ENCODE measurements at regions of chr17 and their contacts with region 1.

Region 1: GRCh38 chr17:7897773-7898172 is 9.2 kb downstream of the CHD3 start:
- DNase-seq: no peak
- H3K4me3 ChIP-seq: no peak overlapping the region
- H3K27ac ChIP-seq: no peak overlapping the region
- H3K27me3 ChIP-seq: no peaks in the 10 kb centered on the region
- CTCF ChIP-seq: peak; percentile 70

Region 2: GRCh38 chr17:7740481-7741001 is 157.2 kb before region 1 on chr17:
- CTCF ChIA-PET with region 1: interaction called, 11 read pairs
- POLR2A ChIA-PET with region 1: no interaction called
- DNase-seq: no peak
- H3K4me3 ChIP-seq: peak overlapping the region; percentile 7; the same call in 1 of the 2 replicates
- H3K27ac ChIP-seq: no peak overlapping the region
- H3K27me3 ChIP-seq: peaks cover 26% of the 10 kb centered on the region
- CTCF ChIP-seq: no peak

Region 3: GRCh38 chr17:7862692-7863437 is 34.9 kb before region 1 on chr17:
- CTCF ChIA-PET with region 1: interaction called, 46 read pairs
- POLR2A ChIA-PET with region 1: no interaction called
- DNase-seq: no peak
- H3K4me3 ChIP-seq: no peak overlapping the region
- H3K27ac ChIP-seq: no peak overlapping the region
- H3K27me3 ChIP-seq: no peaks in the 10 kb centered on the region
- CTCF ChIP-seq: peak; percentile 74

Region 4: DNA sequence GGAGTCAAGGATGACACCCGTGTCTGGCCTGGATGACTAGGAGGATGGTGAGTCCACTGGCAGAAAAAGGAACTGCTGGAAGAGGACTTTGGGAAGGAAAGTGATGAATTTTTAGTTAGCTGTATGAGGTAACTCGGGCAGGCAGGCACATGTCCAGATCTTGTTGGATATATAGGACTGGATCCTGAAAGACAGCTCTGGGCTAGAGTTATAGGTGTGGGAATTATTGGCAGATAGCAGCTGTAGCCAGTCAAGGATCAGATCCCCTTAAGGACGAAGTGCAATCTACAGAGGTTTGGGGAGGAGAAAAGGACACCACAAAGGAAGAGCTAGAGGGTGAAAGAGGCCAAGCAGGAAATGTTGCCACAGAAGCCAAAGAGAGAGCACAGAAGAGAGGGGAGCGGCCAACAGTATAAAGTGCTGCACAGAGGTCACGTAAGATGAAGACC is 29.9 kb before region 1 on chr17:
- CTCF ChIA-PET with region 1: interaction called, 46 read pairs
- POLR2A ChIA-PET with region 1: no interaction called
- DNase-seq: no peak
- H3K4me3 ChIP-seq: no peak overlapping the region
- H3K27ac ChIP-seq: no peak overlapping the region
- H3K27me3 ChIP-seq: no peaks in the 10 kb centered on the region
- CTCF ChIP-seq: no peak

Region 5: GRCh38 chr17:8091033-8091687 is 193.4 kb after region 1 on chr17:
- CTCF ChIA-PET with region 1: no interaction called
- POLR2A ChIA-PET with region 1: no interaction called
- DNase-seq: no peak
- H3K4me3 ChIP-seq: no peak overlapping the region
- H3K27ac ChIP-seq: no peak overlapping the region
- H3K27me3 ChIP-seq: peaks cover 31% of the 10 kb centered on the region
- CTCF ChIP-seq: no peak

Region 6: GRCh38 chr17:8366231-8366630 is 468.5 kb after region 1 on chr17:
- CTCF ChIA-PET with region 1: no interaction called
- POLR2A ChIA-PET with region 1: no interaction called
- DNase-seq: peak; percentile 44
- H3K4me3 ChIP-seq: no peak overlapping the region
- H3K27ac ChIP-seq: no peak overlapping the region
- H3K27me3 ChIP-seq: no peaks in the 10 kb centered on the region
- CTCF ChIP-seq: no peak